ENCODE measurements at regions of chr1 and their contacts with region 1.

Region 1: DNA sequence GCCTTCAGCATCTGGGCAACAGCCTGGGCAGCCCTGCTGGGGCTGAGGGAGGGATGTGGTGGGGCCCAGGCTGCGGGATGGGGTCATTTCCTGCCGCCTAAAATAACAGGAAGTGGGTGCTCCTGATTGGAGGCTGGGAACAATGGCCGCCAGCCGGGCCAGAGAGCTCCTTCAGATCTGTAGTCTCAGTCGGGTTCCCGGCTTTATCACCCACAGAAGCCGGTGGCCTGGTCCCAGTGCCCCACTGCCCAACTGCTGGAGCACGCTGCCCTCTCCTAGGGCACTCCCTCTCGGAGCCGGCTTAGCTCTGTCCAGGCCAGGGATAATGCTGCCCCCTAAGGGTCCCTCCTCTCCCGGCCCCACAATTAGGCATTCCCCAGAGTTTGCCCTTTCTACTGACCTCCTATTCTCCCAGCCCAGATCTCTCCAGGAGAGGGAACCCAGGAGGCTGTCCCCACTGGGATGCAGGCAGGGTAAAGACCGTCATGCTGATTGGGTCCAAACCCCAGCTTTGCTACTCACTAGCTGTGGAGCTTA is 5.1 kb downstream of the MAP7D1 start:
- DNase-seq: peak; percentile 71
- CTCF ChIP-seq: peak; percentile 46

Region 2: GRCh38 chr1:36099681-36100341 is 61.2 kb before region 1 on chr1:
- CTCF ChIA-PET with region 1: interaction called, 10 read pairs
- POLR2A ChIA-PET with region 1: no interaction called
- DNase-seq: peak; percentile 89
- CTCF ChIP-seq: peak; percentile 88

Region 3: GRCh38 chr1:36142121-36142520 is 18.9 kb before region 1 on chr1:
- CTCF ChIA-PET with region 1: interaction called, 26 read pairs
- POLR2A ChIA-PET with region 1: no interaction called
- DNase-seq: no peak
- CTCF ChIP-seq: no peak

Region 4: GRCh38 chr1:36149237-36149972 is 11.6 kb before region 1 on chr1 and contains the start of gene TRAPPC3:
- CTCF ChIA-PET with region 1: interaction called, 106 read pairs
- POLR2A ChIA-PET with region 1: interaction called, 30 read pairs
- DNase-seq: peak; percentile 98
- CTCF ChIP-seq: peak; percentile 99

Measured in GM10248 (cell line).